ENCODE measurements at regions of chr14 and their contacts with region 1.

Region 1: GRCh38 chr14:64294672-64295413 is 672 bp upstream of the ESR2 start:
- DNase-seq: peak; percentile 54
- H3K4me3 Mint-ChIP-seq: no peak overlapping the region
- H3K27ac Mint-ChIP-seq: no peak overlapping the region
- H3K4me1 Mint-ChIP-seq: peaks cover 8% of the 10 kb centered on the region
- H3K27me3 Mint-ChIP-seq: no peaks in the 10 kb centered on the region
- CTCF ChIP-seq: peak; percentile 66

Region 2: DNA sequence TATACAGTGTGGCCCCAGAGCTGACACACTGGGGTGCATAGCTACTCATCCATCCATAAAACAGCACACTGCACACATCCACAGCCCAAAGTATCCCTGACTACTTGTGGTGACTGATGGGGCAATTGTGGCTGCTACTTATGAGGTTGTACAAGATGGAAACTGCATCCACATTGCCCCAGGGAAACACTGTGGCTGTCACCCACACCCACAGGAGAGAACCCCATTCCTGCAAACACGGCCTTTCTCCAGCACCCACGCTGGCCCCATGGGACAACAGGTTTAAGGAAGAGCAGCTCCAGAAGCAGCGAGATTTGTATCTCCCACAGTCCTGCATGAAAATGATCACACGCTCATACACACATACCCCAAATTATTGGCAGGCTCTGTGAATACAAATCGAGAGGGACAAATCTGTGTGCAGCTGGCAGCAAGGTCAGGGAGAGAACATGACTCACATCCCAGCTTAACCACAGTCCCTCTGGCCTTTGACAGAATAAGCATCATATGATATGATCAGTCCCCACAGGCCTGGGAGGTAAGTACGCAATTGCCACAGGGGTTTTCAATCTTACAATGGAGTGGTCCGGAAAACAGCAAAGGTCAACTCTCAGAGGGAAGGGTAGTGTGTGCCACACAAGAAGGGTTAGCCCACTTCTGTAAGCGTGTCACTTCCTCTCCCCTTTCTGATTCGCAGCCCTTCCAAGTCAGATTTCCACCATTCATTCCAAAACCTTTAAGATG is 62.6 kb before region 1 on chr14:
- CTCF ChIA-PET with region 1: interaction called, 3 read pairs
- POLR2A ChIA-PET with region 1: no interaction called
- intact Hi-C with region 1: loop called (anchors 10 kb)
- DNase-seq: peak; percentile 69
- H3K4me3 Mint-ChIP-seq: no peak overlapping the region
- H3K27ac Mint-ChIP-seq: peak overlapping the region; percentile 61
- H3K4me1 Mint-ChIP-seq: peaks cover 18% of the 10 kb centered on the region
- H3K27me3 Mint-ChIP-seq: no peaks in the 10 kb centered on the region
- CTCF ChIP-seq: no peak

Region 3: GRCh38 chr14:65117769-65118701 is 823.2 kb after region 1 on chr14:
- CTCF ChIA-PET with region 1: no interaction called
- POLR2A ChIA-PET with region 1: no interaction called
- intact Hi-C with region 1: no loop called
- DNase-seq: no peak
- H3K4me3 Mint-ChIP-seq: no peak overlapping the region
- H3K27ac Mint-ChIP-seq: no peak overlapping the region
- H3K4me1 Mint-ChIP-seq: no peaks in the 10 kb centered on the region
- H3K27me3 Mint-ChIP-seq: no peaks in the 10 kb centered on the region
- CTCF ChIP-seq: no peak